Common myeloid progenitor, CD34-positive (primary cell): ENCODE measurements at regions of chr6 and their contacts with region 1.

Region 1: DNA sequence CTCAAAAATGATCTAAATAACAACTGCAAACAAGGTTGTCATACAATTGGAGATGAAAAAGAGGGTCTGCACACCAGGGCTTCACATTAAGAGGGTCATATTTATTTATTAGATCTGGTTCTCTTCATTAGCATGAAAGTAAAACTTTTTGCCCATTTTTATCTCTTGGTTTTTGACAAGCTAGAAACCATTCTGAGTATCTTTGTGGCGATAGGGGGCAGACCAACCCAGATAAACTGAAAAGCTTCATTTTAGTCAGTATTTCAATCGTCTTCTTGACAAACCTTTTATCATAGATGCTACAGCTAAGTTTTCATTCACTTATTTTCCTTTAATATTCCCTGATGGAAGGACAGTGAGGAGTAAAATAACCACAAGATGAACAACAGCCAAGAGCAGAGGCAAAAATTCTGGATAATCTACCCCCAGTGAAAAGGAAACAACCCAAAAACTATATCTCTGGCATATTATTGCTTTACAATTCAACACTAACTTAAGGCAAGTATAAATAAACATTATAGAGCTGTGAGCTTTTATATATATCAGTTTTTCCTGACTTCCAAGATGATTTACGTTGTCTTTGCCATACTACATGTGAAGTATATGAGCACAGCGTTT is 45.2 kb downstream of the THEMIS start:
- DNase-seq: peak; percentile 20 to 50 (median 37)
- H3K4me3 ChIP-seq: no peak overlapping the region
- H3K27ac ChIP-seq: no peak overlapping the region
- H3K4me1 ChIP-seq: peaks cover 0 to 7% (median 0%) of the 10 kb centered on the region in 4 experiments
- H3K27me3 ChIP-seq: no peaks in the 10 kb centered on the region

Region 2: DNA sequence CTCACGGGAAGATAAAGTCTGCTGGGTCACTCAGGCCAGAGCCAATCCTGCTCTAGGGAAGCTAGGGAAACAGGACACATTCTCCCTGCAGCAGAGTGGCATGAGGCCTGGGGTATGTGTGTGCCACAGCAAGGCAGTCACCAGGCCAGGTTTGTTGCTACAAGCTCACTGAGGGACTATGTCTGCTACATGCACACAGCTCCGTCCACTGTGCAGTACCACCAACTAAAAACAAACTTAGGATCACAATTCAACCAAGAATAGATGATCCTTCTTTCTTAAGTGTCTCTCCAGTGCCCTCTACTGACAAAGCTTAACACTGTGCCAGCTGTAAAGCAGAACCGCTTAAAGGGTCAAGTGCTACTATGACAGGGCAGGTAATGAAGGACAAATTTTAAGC is 472.2 kb after region 1 on chr6:
- CTCF ChIA-PET with region 1: interaction called, 16 read pairs
- POLR2A ChIA-PET with region 1: no interaction called
- DNase-seq: peak; percentile 25 to 64 (median 51)
- H3K4me3 ChIP-seq: no peak overlapping the region
- H3K27ac ChIP-seq: no peak overlapping the region
- H3K4me1 ChIP-seq: no peaks in the 10 kb centered on the region
- H3K27me3 ChIP-seq: no peaks in the 10 kb centered on the region